ENCODE measurements at regions of chr7 and their contacts with region 1.

Region 1: DNA sequence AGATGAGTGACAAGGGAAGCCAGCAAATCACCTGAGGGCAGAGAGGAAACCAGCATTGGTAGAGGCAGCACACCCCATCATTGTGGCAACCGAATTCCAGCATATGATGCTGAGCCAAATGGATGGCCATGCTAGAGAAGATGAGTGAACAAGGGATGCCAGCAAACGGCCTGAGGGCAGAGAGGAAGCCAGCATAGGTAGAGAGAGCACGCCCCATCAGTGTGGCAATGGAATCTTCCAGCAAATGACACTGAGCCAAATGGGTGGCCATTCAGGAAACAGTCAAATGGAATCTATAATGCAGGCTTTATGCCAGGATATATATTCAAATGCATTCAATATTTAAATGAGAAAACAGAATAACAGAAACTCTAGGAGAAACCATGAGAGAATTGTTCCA is 21.6 kb downstream of the PKD1L1 start:
- DNase-seq: no peak
- ATAC-seq: no peak
- H3K4me3 ChIP-seq: no peak overlapping the region
- H3K27ac ChIP-seq: no peak overlapping the region
- H3K4me1 ChIP-seq: no peaks in the 10 kb centered on the region
- CTCF ChIP-seq: no peak
- EP300 ChIP-seq: no peak
- POLR2A ChIP-seq: no peak
- RAD21 ChIP-seq: no peak

Region 2: DNA sequence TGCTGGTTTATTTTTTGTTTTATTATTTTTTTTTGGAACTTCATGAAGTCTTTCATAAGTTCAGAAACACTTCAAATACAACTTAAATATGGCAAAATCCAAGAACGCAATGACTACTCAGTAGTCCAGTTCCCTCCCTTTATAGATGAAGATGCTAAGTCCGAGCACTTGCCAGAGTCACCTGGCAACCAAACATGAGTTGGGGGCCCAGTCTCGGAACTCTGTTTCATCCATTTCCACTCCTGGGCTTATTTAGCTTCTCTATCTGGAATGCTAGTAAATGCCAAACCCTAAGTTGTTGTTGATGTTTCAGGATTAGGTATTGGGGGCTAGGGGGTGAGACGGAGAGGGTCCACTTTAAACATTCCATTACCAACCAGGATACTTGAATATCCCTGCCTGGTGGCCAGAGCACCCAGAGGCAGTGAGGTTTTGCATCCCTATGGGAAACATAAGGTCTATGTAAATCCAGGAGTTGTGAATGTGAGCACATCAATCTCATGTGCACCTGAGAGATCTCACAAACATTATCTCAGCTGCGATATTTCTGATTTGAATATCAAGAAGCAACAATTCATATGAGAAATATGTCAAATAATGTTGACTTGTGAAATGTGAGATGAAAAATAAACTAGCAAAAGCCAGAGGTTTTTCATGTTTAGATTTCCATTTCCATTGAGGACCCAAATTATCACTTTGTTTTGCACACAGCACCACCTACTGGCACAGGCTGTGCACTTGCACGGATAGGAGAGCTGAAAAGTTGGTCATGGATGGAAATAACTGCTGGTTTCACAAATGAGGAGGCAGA is 107.7 kb before region 1 on chr7:
- CTCF ChIA-PET with region 1: no interaction called
- POLR2A ChIA-PET with region 1: no interaction called
- DNase-seq: peak; percentile 72 to 82
- ATAC-seq: peak; percentile 87 to 88; a peak in 5 of 6 replicates
- H3K4me3 ChIP-seq: no peak overlapping the region
- H3K27ac ChIP-seq: peak overlapping the region; percentile 79 to 90
- H3K4me1 ChIP-seq: peaks cover 48% of the 10 kb centered on the region
- CTCF ChIP-seq: peak; percentile 97
- EP300 ChIP-seq: no peak; a peak in 1 of 5 replicates
- POLR2A ChIP-seq: no peak
- RAD21 ChIP-seq: peak; percentile 99

Region 3: GRCh38 chr7:47937065-47937683 is 10.5 kb after region 1 on chr7:
- CTCF ChIA-PET with region 1: interaction called, 24 read pairs
- POLR2A ChIA-PET with region 1: no interaction called
- DNase-seq: no peak
- ATAC-seq: no peak
- H3K4me3 ChIP-seq: no peak overlapping the region
- H3K27ac ChIP-seq: no peak overlapping the region
- H3K4me1 ChIP-seq: peaks cover 13% of the 10 kb centered on the region
- CTCF ChIP-seq: no peak
- EP300 ChIP-seq: no peak
- POLR2A ChIP-seq: no peak
- RAD21 ChIP-seq: no peak

Region 4: DNA sequence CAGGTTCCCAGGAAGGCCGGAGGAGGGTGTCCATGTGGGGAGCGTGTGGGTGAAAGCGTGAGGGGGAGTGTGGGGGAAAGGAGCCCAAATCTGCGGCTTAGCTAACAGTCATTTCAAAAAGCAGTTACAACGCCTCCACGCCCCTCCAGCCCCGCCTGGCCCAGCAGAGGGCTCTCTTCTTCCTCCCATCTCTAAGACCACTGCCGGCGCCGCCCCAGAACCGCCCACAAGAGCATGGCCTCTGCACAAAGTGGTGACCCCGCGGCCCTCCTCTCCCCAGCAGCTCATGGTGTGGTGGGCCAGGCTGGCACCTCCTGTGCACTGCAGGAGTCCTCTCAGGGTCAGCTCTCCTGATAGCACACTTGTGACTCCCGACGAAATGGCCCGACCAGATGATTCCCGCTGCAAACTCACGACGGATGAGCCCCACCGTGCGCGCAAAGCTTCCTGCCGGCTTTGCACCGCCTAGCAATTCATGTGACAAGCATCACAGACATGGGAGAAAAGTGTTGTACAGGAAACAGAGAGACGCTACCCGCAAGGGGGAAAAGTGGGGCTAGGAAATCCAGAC is 65.1 kb after region 1 on chr7:
- CTCF ChIA-PET with region 1: no interaction called
- POLR2A ChIA-PET with region 1: no interaction called
- DNase-seq: peak; percentile 52 to 74
- ATAC-seq: peak; percentile 95 to 100
- H3K4me3 ChIP-seq: no peak overlapping the region
- H3K27ac ChIP-seq: no peak overlapping the region
- H3K4me1 ChIP-seq: no peaks in the 10 kb centered on the region
- CTCF ChIP-seq: peak; percentile 55
- EP300 ChIP-seq: no peak
- POLR2A ChIP-seq: no peak
- RAD21 ChIP-seq: peak; percentile 82 to 91

Measured in A549 (cell line).